ENCODE measurements at regions of chr5 and their contacts with region 1.

Region 1: GRCh38 chr5:78008356-78008967 is 232.3 kb upstream of the TBCA start:
- DNase-seq: no peak
- ATAC-seq: no peak
- H3K4me3 Mint-ChIP-seq: no peak overlapping the region
- H3K27ac Mint-ChIP-seq: no peak overlapping the region
- H3K4me1 Mint-ChIP-seq: no peaks in the 10 kb centered on the region
- H3K27me3 Mint-ChIP-seq: no peaks in the 10 kb centered on the region
- CTCF ChIP-seq: peak; percentile 47

Region 2: DNA sequence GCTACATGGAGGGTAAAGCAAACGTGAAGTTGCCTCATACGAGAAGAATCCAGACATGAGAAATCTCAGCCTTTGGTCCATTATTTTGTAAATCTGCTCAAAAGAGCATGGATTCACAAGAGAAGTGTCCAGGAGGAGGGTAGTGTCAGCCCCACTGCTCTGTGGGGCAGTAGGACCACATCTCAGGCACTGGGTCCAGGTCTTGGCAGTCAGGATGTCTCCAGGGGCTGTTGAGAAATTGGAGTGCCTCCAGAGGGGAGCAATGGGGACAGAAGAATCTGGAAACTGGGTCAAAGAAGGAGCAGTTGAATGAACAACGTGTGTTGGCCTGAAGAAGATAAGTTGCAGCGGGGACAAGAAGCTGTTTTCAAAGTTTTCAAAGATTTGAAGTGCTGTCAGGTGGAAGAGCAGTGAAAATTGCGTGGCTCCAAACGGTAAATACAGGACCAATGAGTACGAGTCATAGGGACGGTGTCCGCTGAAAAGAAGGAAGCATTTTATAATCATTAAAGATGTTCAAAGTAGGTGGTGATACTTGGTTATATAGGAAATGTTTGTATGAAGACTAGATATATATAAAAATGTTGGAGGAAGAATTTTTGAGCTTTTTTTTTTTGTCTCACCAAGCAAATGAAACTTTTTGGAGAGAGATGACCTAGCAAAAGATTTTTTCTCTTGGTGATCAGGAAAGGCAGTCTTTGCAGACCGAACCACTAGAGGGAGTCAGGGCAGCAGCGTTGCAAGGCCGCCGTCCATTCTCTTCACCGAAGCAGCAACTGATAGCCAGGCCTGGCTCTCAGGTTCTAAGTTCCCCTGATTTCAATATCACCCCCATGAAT is 864.2 kb before region 1 on chr5:
- CTCF ChIA-PET with region 1: no interaction called
- POLR2A ChIA-PET with region 1: no interaction called
- intact Hi-C with region 1: loop called (anchors 2 kb)
- DNase-seq: no peak
- ATAC-seq: peak; percentile 65
- H3K4me3 Mint-ChIP-seq: no peak overlapping the region
- H3K27ac Mint-ChIP-seq: no peak overlapping the region
- H3K4me1 Mint-ChIP-seq: peaks cover 2% of the 10 kb centered on the region
- H3K27me3 Mint-ChIP-seq: peaks cover 2% of the 10 kb centered on the region
- CTCF ChIP-seq: no peak

Region 3: GRCh38 chr5:77518304-77518703 is 490.2 kb before region 1 on chr5:
- CTCF ChIA-PET with region 1: no interaction called
- POLR2A ChIA-PET with region 1: no interaction called
- intact Hi-C with region 1: loop called (anchors 1 kb)
- DNase-seq: no peak
- ATAC-seq: no peak
- H3K4me3 Mint-ChIP-seq: no peak overlapping the region
- H3K27ac Mint-ChIP-seq: no peak overlapping the region
- H3K4me1 Mint-ChIP-seq: no peaks in the 10 kb centered on the region
- H3K27me3 Mint-ChIP-seq: peaks cover 5% of the 10 kb centered on the region
- CTCF ChIP-seq: no peak

Region 4: DNA sequence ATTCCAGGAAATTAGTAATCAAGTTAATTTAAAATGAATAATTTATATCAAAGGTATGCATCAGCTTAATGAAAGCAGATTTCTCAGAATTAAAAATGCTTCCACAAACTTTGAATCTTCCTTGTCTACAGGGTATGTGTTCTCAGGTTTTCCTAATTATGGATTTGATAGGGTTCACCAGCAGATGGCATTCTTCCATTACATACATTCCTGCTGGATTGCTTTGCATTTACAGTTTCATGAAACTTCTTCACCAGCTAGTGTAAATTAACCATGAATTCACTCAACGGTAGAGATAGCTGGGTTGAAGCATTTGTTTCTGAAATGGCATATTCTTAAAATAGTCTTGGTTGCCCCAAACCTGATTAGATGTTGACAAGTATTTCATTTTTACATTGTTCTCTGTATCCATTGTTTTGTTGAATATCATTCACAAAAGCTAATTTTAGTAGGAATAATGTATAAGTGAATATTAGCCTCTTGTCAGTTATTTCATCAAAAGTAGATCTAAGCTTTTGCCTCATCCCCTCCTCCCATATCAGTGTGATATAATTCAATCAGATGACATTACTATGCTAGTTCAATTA is 447.7 kb before region 1 on chr5:
- CTCF ChIA-PET with region 1: interaction called, 4 read pairs
- POLR2A ChIA-PET with region 1: no interaction called
- intact Hi-C with region 1: loop called (anchors 2 kb)
- DNase-seq: no peak
- ATAC-seq: no peak
- H3K4me3 Mint-ChIP-seq: no peak overlapping the region
- H3K27ac Mint-ChIP-seq: no peak overlapping the region
- H3K4me1 Mint-ChIP-seq: no peaks in the 10 kb centered on the region
- H3K27me3 Mint-ChIP-seq: peaks cover 4% of the 10 kb centered on the region
- CTCF ChIP-seq: no peak

Region 5: GRCh38 chr5:77607324-77607723 is 401.1 kb before region 1 on chr5:
- CTCF ChIA-PET with region 1: no interaction called
- POLR2A ChIA-PET with region 1: no interaction called
- intact Hi-C with region 1: no loop called
- DNase-seq: no peak
- ATAC-seq: no peak
- H3K4me3 Mint-ChIP-seq: no peak overlapping the region
- H3K27ac Mint-ChIP-seq: no peak overlapping the region
- H3K4me1 Mint-ChIP-seq: no peaks in the 10 kb centered on the region
- H3K27me3 Mint-ChIP-seq: peaks cover 38% of the 10 kb centered on the region
- CTCF ChIP-seq: no peak

Region 6: DNA sequence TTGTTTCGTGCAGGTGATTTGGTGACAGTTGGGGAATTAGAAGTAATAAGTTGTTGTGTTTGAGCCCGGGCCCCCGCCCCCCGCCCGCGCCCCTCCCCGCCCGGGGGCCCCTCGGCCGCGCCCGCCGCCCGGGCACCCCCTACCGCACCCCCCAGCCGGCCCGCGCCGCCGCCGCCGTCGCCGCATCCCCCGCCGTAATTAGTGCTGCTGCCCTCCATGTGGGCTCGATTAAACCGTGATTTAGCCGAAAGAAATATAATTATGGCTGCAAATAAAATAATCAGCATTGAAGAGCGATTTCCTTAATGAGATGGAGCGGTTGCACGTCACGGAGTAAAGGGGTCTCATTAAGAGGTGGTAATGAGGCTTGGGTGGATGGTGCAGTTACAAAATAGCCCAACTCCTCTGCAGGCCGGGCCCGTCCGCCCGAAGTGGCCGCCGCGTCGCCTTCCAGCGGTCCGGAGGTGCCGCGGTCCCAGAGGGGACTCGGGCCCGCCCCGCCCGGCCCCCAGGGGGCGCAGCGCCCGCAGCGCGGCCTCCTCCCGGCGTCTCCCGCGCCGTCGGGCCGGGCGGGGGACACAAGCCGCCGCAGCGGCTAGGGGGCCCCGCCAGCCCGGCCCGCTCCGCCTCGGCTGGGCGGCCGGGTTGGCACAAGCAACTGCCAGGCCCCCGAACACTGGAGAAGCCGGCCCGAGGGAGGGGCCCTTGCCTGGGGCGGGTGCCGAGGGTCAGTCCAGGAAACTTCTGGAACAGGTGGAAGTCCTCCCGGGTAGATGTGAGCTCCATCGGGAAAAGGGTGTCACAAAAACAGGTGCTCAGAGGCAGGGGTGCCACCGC is 363.1 kb before region 1 on chr5:
- CTCF ChIA-PET with region 1: interaction called, 5 read pairs
- POLR2A ChIA-PET with region 1: no interaction called
- intact Hi-C with region 1: loop called (anchors 1 kb)
- DNase-seq: peak; percentile 66
- ATAC-seq: peak; percentile 83
- H3K4me3 Mint-ChIP-seq: peak overlapping the region; percentile 75
- H3K27ac Mint-ChIP-seq: no peak overlapping the region
- H3K4me1 Mint-ChIP-seq: peaks cover 15% of the 10 kb centered on the region
- H3K27me3 Mint-ChIP-seq: peaks cover 65% of the 10 kb centered on the region
- CTCF ChIP-seq: no peak

Region 7: GRCh38 chr5:77867194-77867691 is 141.2 kb before region 1 on chr5:
- CTCF ChIA-PET with region 1: no interaction called
- POLR2A ChIA-PET with region 1: no interaction called
- intact Hi-C with region 1: loop called (anchors 2 kb)
- DNase-seq: no peak
- ATAC-seq: no peak
- H3K4me3 Mint-ChIP-seq: no peak overlapping the region
- H3K27ac Mint-ChIP-seq: no peak overlapping the region
- H3K4me1 Mint-ChIP-seq: no peaks in the 10 kb centered on the region
- H3K27me3 Mint-ChIP-seq: no peaks in the 10 kb centered on the region
- CTCF ChIP-seq: no peak

Region 8: DNA sequence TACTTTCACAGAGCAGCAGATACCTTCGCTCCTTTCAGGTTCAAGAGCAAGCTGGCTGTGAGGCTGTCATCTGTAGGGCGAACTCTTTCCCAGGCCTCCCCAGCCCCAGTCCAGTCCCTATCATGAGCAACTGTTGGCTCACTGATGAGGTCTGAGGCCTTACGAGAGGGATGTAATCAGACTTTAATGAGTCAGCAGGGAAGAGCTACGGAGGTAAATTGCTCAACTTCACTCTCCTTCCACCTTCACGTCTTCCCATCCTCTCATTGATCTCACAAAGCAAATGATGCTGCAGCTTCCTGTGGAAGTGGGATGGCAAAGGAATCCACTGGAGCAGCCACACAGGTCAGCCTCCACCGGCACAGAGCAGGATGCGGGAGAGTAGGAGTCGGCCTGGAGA is 101.7 kb before region 1 on chr5:
- CTCF ChIA-PET with region 1: no interaction called
- POLR2A ChIA-PET with region 1: no interaction called
- intact Hi-C with region 1: no loop called
- DNase-seq: no peak
- ATAC-seq: no peak
- H3K4me3 Mint-ChIP-seq: no peak overlapping the region
- H3K27ac Mint-ChIP-seq: no peak overlapping the region
- H3K4me1 Mint-ChIP-seq: no peaks in the 10 kb centered on the region
- H3K27me3 Mint-ChIP-seq: peaks cover 10% of the 10 kb centered on the region
- CTCF ChIP-seq: no peak

Region 9: DNA sequence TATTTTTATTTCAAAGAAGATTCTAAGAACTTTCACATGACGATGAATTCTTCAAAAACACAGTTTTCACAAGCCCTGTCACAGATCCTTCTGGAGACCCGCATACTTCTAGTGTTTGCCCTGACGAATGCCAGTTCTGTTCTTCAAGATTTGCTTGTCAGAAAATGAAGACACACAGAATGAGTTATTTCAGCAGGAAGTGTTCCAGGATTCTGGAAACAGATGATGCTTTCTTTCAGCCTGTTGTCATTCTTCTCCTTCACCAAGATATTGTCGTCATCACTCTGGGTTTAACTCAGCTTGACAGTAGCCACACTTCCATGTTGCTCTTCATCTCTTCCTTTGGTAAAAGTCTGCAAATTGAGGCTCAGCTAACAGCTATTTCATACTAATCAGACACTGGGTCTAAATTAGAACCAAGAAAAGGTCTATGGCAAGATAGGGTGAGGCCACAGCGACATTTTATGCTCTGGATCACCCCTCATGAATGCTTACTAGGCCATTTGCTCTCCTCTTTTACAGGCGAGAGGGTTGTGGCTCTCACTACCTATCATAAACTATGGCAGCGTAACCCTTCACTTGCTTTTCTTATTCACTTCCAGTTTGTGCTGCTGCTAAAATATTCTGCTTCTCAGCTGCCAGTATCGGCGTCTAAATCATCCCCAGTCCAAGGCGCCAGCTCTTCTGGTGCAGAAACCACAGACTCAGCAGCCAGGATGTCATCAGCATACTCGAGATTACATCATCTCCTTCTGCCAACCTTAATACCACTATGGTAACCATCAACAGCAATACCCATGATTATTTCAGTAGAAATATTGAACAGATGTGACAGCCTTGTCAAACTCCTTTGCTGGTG is 72.7 kb before region 1 on chr5:
- CTCF ChIA-PET with region 1: no interaction called
- POLR2A ChIA-PET with region 1: no interaction called
- intact Hi-C with region 1: no loop called
- DNase-seq: no peak
- ATAC-seq: peak; percentile 83
- H3K4me3 Mint-ChIP-seq: peak overlapping the region; percentile 1
- H3K27ac Mint-ChIP-seq: peak overlapping the region; percentile 65
- H3K4me1 Mint-ChIP-seq: peaks cover 28% of the 10 kb centered on the region
- H3K27me3 Mint-ChIP-seq: peaks cover 4% of the 10 kb centered on the region
- CTCF ChIP-seq: no peak

Region 10: GRCh38 chr5:78041805-78042204 is 33.3 kb after region 1 on chr5:
- CTCF ChIA-PET with region 1: no interaction called
- POLR2A ChIA-PET with region 1: no interaction called
- intact Hi-C with region 1: no loop called
- DNase-seq: no peak
- ATAC-seq: no peak
- H3K4me3 Mint-ChIP-seq: no peak overlapping the region
- H3K27ac Mint-ChIP-seq: no peak overlapping the region
- H3K4me1 Mint-ChIP-seq: no peaks in the 10 kb centered on the region
- H3K27me3 Mint-ChIP-seq: no peaks in the 10 kb centered on the region
- CTCF ChIP-seq: no peak